ENCODE measurements at regions of chr5 and their contacts with region 1.

Region 1: DNA sequence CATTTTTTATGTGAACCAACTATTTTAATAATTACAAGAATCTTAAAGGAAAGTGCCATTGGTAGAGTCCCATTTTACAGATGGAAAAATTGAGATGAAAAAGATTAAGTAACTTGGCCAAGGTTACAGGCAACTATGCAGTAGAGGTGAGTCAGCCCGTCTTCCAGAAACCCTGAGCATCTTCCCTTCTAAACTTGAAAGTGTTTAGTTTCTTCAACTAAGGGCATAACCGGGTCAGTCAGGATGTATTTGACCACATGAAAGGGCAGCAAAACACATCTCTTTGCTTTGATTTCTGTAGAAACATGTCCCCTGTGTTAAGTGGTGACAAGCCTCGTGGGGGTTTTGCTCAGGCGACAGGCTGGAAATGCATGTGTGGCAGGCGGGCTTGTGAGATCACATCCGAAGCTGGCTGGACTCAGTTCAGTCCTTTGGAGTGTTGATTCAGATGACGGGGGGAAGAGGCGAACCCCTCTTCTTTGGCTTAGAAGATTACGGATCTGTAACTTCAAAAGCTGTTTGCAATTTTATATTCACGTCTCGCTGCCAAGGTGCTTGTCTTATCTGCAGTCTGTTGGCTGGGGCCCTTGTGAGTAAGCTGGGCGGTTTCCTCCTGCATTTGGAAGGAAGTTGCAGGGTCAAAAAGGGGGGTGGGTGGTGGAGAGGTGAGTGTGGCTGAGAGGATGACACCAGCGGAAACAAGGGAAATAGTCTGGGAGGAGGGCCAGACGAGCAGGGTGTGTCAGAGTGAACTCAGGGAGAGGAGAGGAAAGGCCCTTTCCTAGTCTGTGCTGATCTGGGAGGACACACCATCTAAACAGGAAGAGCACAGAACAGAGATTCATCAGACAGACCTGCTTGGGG is 78.9 kb upstream of the RPS23 start:
- DNase-seq: peak; percentile 88
- ATAC-seq: peak; percentile 87
- H3K4me3 Mint-ChIP-seq: peak overlapping the region; percentile 58
- H3K27ac Mint-ChIP-seq: peak overlapping the region; percentile 91
- H3K4me1 Mint-ChIP-seq: peaks cover 24% of the 10 kb centered on the region
- H3K27me3 Mint-ChIP-seq: no peaks in the 10 kb centered on the region
- CTCF ChIP-seq: no peak

Region 2: DNA sequence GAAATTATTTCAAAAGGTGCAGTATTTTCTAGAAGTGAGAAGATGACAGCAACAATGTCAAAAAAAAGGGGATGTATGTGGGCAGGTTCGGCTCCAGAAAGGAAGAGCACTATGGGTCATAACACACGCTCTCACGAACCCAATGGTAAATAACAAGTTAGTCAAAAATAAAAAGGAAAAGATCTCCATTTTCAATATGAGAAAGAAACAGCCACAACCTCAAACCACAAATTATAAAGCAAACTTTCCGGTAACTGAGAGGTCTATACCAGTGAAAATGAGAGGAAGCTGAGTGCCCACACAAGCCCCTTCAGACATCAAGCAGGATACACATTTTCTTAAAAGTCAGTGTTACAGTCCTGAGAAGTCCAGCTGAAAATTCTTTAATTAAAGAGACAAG is 319.6 kb after region 1 on chr5:
- CTCF ChIA-PET with region 1: no interaction called
- POLR2A ChIA-PET with region 1: no interaction called
- intact Hi-C with region 1: loop called (anchors 5 kb)
- DNase-seq: peak; percentile 63
- ATAC-seq: peak; percentile 88
- H3K4me3 Mint-ChIP-seq: peak overlapping the region; percentile 6
- H3K27ac Mint-ChIP-seq: peak overlapping the region; percentile 84
- H3K4me1 Mint-ChIP-seq: peaks cover 37% of the 10 kb centered on the region
- H3K27me3 Mint-ChIP-seq: peaks cover 3% of the 10 kb centered on the region
- CTCF ChIP-seq: no peak

Measured in activated CD8-positive, alpha-beta T cell treated with anti-CD3 and anti-CD28 coated beads for 36 hours (primary cell).